ENCODE measurements at regions of chr1 and their contacts with region 1.

Region 1: DNA sequence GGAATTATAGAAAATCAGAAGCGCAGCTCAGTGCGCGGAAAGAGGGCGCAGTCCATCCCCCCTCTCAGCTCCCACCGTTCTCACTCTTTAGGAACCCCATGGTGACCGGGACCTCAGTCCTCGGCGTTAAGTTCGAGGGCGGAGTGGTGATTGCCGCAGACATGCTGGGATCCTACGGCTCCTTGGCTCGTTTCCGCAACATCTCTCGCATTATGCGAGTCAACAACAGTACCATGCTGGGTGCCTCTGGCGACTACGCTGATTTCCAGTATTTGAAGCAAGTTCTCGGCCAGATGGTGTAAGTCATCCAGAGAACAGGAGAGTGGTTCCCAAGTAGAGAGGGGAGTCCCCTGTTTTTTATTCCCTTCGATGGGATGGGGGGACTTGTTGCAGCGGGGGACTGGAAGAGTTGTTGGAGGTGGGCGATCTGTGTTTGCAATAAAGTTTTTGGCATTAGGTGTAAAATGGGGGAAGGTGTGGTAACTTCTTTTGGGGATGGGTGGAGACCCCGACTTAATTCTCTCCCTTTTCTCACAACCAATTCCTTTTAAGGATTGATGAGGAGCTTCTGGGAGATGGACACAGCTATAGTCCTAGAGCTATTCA is 620 bp downstream of the PSMB4 start:
- DNase-seq: no peak

Region 2: GRCh38 chr1:151198255-151199127 is 201.5 kb before region 1 on chr1 and contains the start of gene PIP5K1A:
- intact Hi-C with region 1: loop called (anchors 2 kb)
- DNase-seq: peak; percentile 99
- total RNA-seq, gene PIP5K1A: 40.6 TPM

Region 3: GRCh38 chr1:151281969-151282882 is 117.8 kb before region 1 on chr1 and contains the start of gene ZNF687:
- intact Hi-C with region 1: loop called (anchors 2 kb)
- DNase-seq: peak; percentile 100
- total RNA-seq, gene ZNF687: 12.8 TPM

Region 4: GRCh38 chr1:151294742-151295462 is 105.1 kb before region 1 on chr1:
- intact Hi-C with region 1: loop called (anchors 5 kb)
- DNase-seq: no peak

Region 5: GRCh38 chr1:151346769-151347522 is 53.0 kb before region 1 on chr1 and contains the start of gene RFX5:
- intact Hi-C with region 1: loop called (anchors 2 kb)
- DNase-seq: peak; percentile 98
- total RNA-seq, gene RFX5: 27.2 TPM